Panc1 (cell line): ENCODE measurements at regions of chr14 and their contacts with region 1.

Region 1: GRCh38 chr14:64580467-64580866 is 30.7 kb downstream of the PPP1R36 start:
- DNase-seq: no peak
- ATAC-seq: no peak
- H3K4me3 ChIP-seq: no peak overlapping the region
- H3K27ac ChIP-seq: no peak overlapping the region
- H3K4me1 ChIP-seq: no peaks in the 10 kb centered on the region
- H3K27me3 ChIP-seq: no peaks in the 10 kb centered on the region
- CTCF ChIP-seq: no peak

Region 2: DNA sequence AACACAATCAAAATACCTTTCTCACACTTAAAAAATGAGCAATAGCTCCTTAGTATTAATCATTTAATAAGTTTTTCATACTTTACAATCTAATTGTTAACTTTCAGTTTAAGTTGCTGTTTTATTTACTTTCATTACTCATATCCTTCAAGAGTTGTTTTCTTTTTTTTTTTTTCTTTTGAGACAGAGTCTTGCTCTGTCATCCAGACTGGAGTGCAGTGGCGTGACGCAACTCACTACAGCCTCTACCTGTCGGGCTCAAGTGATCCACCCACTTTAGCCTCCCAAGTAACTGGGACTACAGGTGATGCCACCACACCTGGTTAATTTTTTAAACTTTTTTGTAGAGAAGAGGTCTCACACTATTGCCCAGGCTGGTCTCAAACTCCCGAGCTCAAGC is 59.8 kb before region 1 on chr14:
- CTCF ChIA-PET with region 1: no interaction called
- POLR2A ChIA-PET with region 1: interaction called, 11 read pairs
- in situ Hi-C with region 1: no loop called
- intact Hi-C with region 1: no loop called
- DNase-seq: no peak
- ATAC-seq: no peak
- H3K4me3 ChIP-seq: no peak overlapping the region
- H3K27ac ChIP-seq: no peak overlapping the region
- H3K4me1 ChIP-seq: no peaks in the 10 kb centered on the region
- H3K27me3 ChIP-seq: no peaks in the 10 kb centered on the region
- CTCF ChIP-seq: no peak